SK-N-SH (cell line): ENCODE measurements at regions of chr3 and their contacts with region 1.

Region 1: DNA sequence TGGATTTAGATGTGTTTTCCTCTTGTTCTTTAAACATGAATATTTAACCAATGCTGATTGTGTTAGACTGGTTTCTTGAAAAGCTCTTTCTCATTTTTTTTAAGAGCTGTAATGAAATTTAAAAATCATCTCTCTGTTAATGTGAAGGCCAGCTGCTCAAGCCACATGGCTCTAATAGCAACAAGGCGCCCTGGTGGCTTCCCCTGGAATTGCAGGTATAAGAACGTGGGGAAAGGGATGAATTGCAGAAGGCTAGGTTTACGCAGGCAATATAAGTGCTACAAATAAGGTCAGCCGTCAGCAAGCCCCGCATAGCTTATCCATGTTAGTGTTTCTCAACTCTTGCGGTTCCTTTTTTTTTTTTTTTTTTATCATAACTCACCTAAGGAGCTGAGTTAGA is 108.5 kb downstream of the SAMMSON start:
- DNase-seq: peak; percentile 17
- H3K4me3 ChIP-seq: peak overlapping the region in 1 of 2 experiments; percentile 23; a peak in 1 of 4 replicates
- H3K27ac ChIP-seq: no peak overlapping the region
- H3K4me1 ChIP-seq: no peaks in the 10 kb centered on the region
- H3K27me3 ChIP-seq: no peaks in the 10 kb centered on the region
- CTCF ChIP-seq: peak; percentile 62
- EP300 ChIP-seq: no peak
- RAD21 ChIP-seq: peak; percentile 29

Region 2: DNA sequence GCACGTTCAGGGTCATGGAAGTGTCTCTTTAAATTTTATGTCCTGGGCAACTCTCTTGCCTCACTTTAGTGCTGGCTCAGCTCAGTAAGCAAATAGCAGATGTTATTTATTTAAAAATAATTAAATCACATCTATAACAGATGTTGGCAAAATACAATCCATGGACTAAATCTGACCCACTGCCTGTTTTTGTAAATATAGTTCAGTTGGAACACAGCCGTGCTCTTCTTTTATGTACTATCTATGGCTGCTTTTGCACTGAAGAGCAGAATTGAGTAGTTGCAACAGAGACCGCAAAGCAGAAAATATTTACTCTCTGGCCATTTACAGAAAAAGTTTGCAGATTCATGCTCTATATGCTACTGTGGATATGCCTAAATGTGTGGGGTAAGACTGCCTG is 29.3 kb before region 1 on chr3:
- CTCF ChIA-PET with region 1: no interaction called
- POLR2A ChIA-PET with region 1: no interaction called
- DNase-seq: no peak
- H3K4me3 ChIP-seq: no peak overlapping the region
- H3K27ac ChIP-seq: no peak overlapping the region
- H3K4me1 ChIP-seq: no peaks in the 10 kb centered on the region; a peak in 1 of 4 replicates
- H3K27me3 ChIP-seq: no peaks in the 10 kb centered on the region
- CTCF ChIP-seq: no peak
- EP300 ChIP-seq: peak in 1 of 2 experiments; percentile 21; a peak in 1 of 4 replicates
- RAD21 ChIP-seq: no peak

Region 3: DNA sequence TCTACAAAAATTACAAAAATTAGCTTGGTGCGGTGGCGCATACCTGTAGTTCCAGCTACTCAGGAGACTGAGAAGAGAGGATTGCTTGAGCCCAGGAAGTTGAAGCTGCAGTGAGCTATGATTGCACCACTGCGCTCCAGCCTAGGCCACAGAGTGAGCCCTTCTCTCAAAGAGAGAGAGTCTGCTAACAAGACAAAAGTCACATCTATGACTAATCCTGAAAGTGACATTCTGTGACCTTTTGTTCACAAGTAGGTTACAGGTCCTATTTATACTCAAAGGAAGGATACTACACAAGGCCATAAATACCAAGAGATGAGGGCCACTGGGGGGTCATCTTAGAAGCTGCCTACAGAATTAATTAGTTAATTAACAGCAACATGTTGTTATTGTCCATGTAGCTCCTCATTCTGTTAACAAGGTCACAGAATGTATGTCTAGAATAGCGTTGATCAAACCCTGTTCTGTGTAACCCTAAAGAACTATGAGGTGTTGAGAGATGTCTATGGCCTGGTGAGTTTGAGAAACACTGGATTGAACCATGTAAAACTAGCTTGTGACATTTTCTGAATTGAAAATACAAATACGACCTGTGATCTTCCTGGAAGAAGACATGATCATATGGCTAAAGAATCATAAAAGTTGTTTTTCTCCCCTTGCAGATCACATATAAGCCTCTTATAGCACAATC is 11.6 kb before region 1 on chr3:
- CTCF ChIA-PET with region 1: interaction called, 73 read pairs
- POLR2A ChIA-PET with region 1: no interaction called
- DNase-seq: no peak
- H3K4me3 ChIP-seq: no peak overlapping the region
- H3K27ac ChIP-seq: no peak overlapping the region
- H3K4me1 ChIP-seq: no peaks in the 10 kb centered on the region
- H3K27me3 ChIP-seq: no peaks in the 10 kb centered on the region
- CTCF ChIP-seq: no peak
- EP300 ChIP-seq: no peak
- RAD21 ChIP-seq: no peak

Region 4: DNA sequence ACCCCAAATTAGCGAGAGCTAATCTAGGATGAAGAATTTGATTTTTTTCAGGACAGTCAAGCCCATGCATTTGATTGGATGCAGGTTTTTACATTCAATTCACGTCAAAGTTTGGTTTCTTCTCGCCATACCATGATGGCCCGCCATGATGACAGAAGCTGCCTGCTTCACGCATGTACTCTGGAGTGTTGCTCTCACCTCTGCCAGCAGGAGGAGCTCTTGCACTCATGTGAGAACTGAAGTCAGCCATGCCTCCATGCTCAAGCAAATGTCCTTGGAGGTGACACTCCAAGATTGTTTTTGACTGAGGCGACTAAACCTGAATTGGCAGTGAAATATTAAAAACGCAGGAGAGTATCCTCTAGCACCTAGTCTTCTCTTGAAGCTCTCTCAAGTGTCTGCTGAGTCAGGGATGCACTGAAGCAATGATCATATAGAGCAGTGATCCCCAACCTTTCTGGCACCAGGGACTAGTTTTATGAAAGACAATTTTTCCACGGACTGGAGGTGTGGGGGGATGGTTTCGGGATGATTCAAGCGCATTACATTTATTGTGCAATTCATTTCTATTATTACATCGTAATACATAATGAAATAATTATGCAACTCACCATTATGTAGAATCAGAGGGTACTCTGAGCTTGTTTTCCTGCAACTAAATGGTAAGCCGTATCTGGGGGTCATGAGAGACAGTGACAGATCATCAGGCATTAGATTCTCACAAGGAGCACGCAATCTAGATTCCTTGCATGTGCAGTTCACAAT is 12.5 kb after region 1 on chr3:
- CTCF ChIA-PET with region 1: interaction called, 11 read pairs
- POLR2A ChIA-PET with region 1: no interaction called
- DNase-seq: peak; percentile 29
- H3K4me3 ChIP-seq: no peak overlapping the region
- H3K27ac ChIP-seq: no peak overlapping the region
- H3K4me1 ChIP-seq: no peaks in the 10 kb centered on the region
- H3K27me3 ChIP-seq: no peaks in the 10 kb centered on the region
- CTCF ChIP-seq: peak; percentile 75
- EP300 ChIP-seq: no peak
- RAD21 ChIP-seq: peak; percentile 67